Activated naive CD8-positive, alpha-beta T cell treated with anti-CD3 and anti-CD28 coated beads, Interleukin-2, amount 10 ng/mL, durations not matched to agents 7 days and 5 days (primary cell): ENCODE measurements at regions of chr19 and their contacts with region 1.

Region 1: DNA sequence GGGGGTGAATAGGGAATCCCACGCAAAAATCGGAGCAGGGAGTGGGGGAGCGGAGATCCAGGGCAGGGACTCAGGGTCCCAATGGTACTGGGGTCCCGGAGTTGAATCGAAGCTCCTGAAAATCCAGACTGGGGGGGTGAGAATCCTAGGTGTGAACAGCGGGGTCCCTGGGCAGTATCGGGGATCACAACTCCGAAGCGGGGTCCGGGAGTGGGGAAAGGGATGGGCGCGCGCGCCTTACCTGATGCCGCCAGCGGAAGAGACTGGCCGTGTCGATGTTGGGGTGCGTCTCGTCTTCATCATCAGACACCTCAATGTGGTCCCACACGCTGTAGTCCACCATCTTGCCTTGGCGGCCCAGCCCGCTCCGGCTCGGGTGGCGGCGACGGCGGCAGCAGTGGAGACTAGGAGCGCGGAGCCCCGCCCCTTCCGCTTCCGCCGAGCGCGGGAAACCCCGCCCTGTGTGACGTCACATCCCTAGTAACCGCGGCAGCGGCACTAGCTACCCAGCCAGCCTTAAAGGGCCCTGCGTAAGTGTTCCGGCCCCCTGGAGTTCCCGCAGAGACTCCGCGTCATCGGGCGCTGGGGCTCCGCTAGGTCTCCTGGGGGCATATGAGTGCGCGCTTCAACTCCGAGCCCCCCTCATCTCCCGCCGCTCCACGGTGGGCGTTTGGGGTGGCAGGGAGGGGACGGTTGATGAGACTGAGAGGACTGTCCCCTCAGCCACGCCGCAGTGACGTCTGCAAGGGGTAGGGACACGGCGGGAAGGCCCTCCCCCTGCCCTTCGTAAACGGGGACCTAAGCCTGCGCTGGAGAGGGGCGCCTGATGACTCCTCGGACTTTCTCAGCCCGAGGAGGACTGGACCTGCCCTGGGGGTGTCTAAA is at the start of gene CDC37:
- DNase-seq: peak; percentile 99
- ATAC-seq: peak; percentile 68
- H3K4me3 Mint-ChIP-seq: peak within 1 kb of the TSS; percentile 88
- H3K27ac Mint-ChIP-seq: peak within 1 kb of the TSS; percentile 91
- H3K4me1 Mint-ChIP-seq: peaks cover 52% of the 10 kb centered on the region
- H3K27me3 Mint-ChIP-seq: no peaks in the 10 kb centered on the region
- total RNA-seq, gene CDC37: 242 to 248 TPM

Region 2: DNA sequence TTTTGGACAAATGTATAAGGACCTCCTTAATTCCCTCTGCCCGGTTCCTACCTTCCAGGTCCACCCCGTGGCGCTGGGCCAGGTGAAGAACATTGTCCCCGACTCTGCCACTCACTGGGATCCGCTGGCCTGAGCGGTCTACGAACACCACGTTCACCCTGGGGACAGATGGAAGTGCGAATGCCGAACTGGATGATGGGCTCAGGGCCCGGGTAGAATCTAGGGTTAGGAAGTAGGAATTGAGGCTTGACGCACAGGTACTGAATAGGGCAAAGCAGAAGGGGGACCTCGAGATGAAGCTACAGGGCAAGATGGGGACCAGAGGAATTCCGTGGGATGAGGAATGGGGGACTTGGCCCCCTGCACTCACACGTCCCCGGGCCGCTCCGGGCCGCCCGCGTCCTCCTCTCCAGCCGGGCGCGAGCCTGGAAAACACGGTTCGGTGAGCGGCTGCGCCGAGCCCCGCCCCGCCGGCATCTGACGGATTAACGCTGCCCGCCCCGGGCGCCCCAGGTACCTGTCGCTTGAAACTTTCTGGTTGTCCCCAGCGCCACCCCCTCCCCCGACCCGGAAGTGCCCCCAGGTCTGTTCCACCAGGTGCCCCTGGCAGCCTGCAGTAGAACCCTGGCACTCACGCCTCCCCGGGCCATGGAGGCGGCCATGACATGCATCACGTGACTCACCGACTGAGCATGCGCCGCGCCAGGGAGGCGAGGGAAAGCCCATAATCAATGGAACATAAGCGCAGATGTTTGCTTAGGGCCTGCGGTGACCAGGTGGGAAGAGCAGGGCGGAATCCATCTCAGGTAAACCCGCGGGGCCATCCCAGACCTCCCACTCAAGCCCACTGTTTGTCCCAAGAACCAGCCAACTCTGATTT is 87.8 kb before region 1 on chr19 and contains the start of gene FDX2:
- POLR2A ChIA-PET with region 1: no interaction called
- DNase-seq: peak; percentile 91
- ATAC-seq: peak; percentile 86
- H3K4me3 Mint-ChIP-seq: peak within 1 kb of the TSS; percentile 93
- H3K27ac Mint-ChIP-seq: peak within 1 kb of the TSS; percentile 78
- H3K4me1 Mint-ChIP-seq: peaks cover 11% of the 10 kb centered on the region
- H3K27me3 Mint-ChIP-seq: no peaks in the 10 kb centered on the region
- total RNA-seq, gene FDX2: 7.6 to 9.4 TPM

Region 3: DNA sequence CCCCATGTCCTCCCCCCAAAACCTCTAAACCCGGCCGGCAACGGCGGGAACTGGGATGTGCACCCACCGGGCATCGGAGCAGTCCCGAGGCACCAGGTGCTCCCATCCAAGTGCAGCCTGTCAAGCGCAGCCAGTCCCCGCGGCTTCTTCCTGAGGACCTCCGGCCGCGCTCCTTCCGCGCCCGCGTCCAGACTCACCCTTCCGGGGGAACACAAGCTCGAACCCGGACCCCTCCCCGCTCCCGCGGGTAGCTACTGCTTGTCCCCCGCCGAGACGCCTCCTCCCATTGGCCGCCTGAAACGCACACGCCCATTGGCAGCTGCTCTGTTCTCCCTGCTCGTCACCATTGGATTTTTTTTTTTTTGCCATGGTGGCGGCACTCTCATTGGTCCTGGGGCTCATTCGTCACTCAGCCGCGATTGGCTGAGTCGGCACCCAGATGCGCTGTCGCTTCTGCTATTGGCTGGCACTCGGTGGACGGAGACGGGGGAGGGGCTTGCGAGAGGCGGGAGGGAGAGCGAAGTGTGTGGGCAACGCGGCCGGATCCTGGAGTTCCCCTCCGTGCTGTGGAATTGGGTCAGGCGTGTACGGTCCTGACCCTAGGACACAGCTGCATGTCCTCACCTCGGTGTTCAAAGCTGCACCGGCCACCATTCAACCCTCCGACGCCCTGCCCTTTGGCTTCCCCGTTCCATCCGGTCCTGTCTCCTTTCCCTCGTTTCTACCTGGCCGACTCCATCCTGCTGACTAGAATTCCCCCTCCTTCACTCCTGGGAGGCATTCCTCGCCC is 22.9 kb before region 1 on chr19 and contains the start of gene TYK2:
- POLR2A ChIA-PET with region 1: interaction called, 10 read pairs
- DNase-seq: peak; percentile 97
- ATAC-seq: peak; percentile 98
- H3K4me3 Mint-ChIP-seq: peak within 1 kb of the TSS; percentile 94
- H3K27ac Mint-ChIP-seq: peak within 1 kb of the TSS; percentile 92
- H3K4me1 Mint-ChIP-seq: peaks cover 17% of the 10 kb centered on the region
- H3K27me3 Mint-ChIP-seq: no peaks in the 10 kb centered on the region
- total RNA-seq, gene TYK2: 277 to 290 TPM

Region 4: GRCh38 chr19:10416380-10417257 is 13.2 kb after region 1 on chr19:
- POLR2A ChIA-PET with region 1: interaction called, 199 read pairs
- DNase-seq: peak; percentile 99
- ATAC-seq: peak; percentile 28
- H3K4me3 Mint-ChIP-seq: peak overlapping the region; percentile 79
- H3K27ac Mint-ChIP-seq: peak overlapping the region; percentile 93
- H3K4me1 Mint-ChIP-seq: peaks cover 48% of the 10 kb centered on the region
- H3K27me3 Mint-ChIP-seq: peaks cover 15% of the 10 kb centered on the region

Region 5: DNA sequence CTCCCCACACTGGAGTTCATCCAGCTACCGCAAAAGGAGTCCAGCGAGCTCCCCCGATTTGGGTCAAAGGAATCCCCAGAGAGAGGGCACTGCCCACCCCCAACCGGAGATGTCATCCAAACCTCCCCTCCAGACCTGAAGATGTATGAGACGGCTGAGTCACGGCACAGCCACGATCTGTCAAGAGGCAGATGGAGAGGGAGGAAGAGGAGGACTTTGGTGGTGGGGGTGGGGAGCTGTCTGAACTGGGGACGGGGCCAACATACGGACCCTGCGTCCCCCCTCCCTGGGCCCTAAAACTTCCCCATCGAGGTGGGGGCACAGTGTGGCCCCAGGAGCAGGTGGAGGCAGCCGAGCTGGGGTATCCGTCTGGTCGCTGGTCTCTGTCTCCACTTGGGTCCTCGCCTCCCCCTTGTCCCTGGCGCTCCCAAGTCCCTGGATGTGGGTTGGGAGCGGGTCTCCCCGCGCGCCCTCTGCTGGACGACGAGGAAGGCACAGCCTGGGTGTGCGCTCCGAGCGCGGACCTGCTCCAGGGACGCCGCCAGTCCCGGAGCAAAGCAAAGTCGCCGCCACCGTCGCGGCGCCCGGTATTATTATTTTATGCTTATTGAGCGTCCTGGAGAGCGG is 20.7 kb after region 1 on chr19:
- POLR2A ChIA-PET with region 1: interaction called, 199 read pairs
- DNase-seq: peak; percentile 84
- ATAC-seq: no peak
- H3K4me3 Mint-ChIP-seq: peak overlapping the region; percentile 85
- H3K27ac Mint-ChIP-seq: peak overlapping the region; percentile 93
- H3K4me1 Mint-ChIP-seq: peaks cover 72% of the 10 kb centered on the region
- H3K27me3 Mint-ChIP-seq: peaks cover 3% of the 10 kb centered on the region

Region 6: GRCh38 chr19:10523135-10523636 is 119.8 kb after region 1 on chr19:
- POLR2A ChIA-PET with region 1: no interaction called
- DNase-seq: no peak
- ATAC-seq: no peak
- H3K4me3 Mint-ChIP-seq: no peak overlapping the region
- H3K27ac Mint-ChIP-seq: no peak overlapping the region
- H3K4me1 Mint-ChIP-seq: peaks cover 12% of the 10 kb centered on the region
- H3K27me3 Mint-ChIP-seq: peaks cover 34% of the 10 kb centered on the region